Activated CD8-positive, alpha-beta T cell treated with anti-CD3 and anti-CD28 coated beads for 36 hours (primary cell): ENCODE measurements at regions of chr5 and their contacts with region 1.

Region 1: DNA sequence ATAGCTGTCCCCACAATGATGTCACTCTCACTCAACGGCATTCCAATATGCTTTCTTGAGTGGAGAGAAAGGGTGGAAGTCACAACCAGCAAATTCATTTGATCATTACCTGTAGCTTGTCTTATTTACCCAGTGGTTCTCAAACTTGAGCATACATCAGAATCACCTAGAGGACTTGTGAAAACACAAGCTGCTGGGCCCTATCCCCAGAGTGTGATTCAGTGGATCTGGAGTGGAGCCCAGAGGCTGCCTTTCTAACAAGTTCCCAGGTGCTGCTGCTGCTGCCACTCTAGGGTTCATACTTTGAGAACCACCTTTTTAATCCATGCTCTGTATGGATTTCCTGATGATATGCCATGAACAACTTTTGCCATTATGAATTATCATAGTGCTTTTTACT is 94.7 kb downstream of the KLHL3 start:
- DNase-seq: no peak
- ATAC-seq: no peak
- H3K4me3 Mint-ChIP-seq: no peak overlapping the region
- H3K27ac Mint-ChIP-seq: no peak overlapping the region
- H3K4me1 Mint-ChIP-seq: no peaks in the 10 kb centered on the region
- H3K27me3 Mint-ChIP-seq: no peaks in the 10 kb centered on the region
- CTCF ChIP-seq: no peak

Region 2: DNA sequence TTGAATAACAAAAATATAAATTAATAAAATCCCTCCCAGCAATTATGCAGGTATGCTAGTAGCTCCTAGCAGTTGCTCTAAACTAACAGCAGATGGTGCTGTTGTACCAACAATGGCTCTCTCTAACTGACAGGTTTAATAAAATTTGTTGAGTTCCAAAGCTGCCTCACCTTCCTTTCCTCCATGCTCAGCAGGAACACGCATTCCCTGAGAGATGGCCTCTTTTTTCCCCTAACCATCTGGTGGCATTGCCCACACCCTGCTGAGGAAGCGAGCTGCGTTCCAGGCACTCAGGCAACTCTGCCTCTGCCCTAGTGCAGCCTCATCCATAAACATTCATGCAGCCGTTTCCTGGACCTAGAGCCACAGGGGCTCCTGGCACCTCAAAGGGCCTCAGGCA is 11.5 kb before region 1 on chr5:
- CTCF ChIA-PET with region 1: interaction called, 25 read pairs
- POLR2A ChIA-PET with region 1: no interaction called
- intact Hi-C with region 1: no loop called
- DNase-seq: peak; percentile 8
- ATAC-seq: peak; percentile 82
- H3K4me3 Mint-ChIP-seq: no peak overlapping the region
- H3K27ac Mint-ChIP-seq: no peak overlapping the region
- H3K4me1 Mint-ChIP-seq: no peaks in the 10 kb centered on the region
- H3K27me3 Mint-ChIP-seq: no peaks in the 10 kb centered on the region
- CTCF ChIP-seq: peak; percentile 94